ENCODE measurements at regions of chr21 and their contacts with region 1.

Region 1: GRCh38 chr21:40143822-40144525 is 276.7 kb downstream of the PCP4 start:
- DNase-seq: peak; percentile 47
- H3K4me3 Mint-ChIP-seq: no peak overlapping the region
- H3K27ac Mint-ChIP-seq: no peak overlapping the region
- H3K4me1 Mint-ChIP-seq: no peaks in the 10 kb centered on the region
- H3K27me3 Mint-ChIP-seq: no peaks in the 10 kb centered on the region

Region 2: DNA sequence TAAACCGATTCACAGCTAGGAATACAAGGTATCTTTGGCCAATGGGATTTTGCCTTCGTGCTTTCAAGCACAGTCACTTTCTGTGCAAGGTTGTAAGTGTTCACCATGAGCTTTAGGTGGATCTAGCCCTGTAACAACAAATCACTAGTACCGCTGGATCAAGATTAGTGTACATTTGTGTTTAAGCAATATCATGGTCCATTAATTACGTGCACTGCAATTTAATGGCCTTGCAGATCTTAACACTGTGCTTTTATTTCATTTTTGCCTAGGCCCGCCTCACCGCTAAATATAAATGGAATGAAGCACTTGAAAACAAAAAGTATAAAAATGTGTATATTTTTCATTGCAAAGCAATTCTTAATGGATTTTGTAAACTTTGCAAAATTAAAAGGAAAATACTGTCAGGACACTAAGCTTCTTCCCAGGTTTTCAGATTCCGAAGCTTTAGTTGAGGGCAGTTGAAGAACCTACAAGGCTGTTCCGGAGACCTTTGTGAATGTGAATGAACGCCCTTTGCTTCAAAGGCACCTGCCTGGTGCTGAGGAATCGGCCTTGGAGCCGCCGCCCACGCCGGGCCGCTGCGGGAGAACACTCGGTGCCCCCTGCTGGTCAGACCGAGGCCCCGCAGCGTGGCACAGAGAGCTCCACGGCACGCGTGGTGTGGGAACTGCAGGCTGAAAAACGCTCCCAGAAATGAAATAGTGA is 242.1 kb after region 1 on chr21:
- CTCF ChIA-PET with region 1: no interaction called
- POLR2A ChIA-PET with region 1: no interaction called
- intact Hi-C with region 1: loop called (anchors 10 kb)
- DNase-seq: peak; percentile 49
- H3K4me3 Mint-ChIP-seq: no peak overlapping the region
- H3K27ac Mint-ChIP-seq: no peak overlapping the region
- H3K4me1 Mint-ChIP-seq: no peaks in the 10 kb centered on the region
- H3K27me3 Mint-ChIP-seq: no peaks in the 10 kb centered on the region

Region 3: GRCh38 chr21:41068967-41069642 is 925.1 kb after region 1 on chr21:
- CTCF ChIA-PET with region 1: interaction called, 4 read pairs
- POLR2A ChIA-PET with region 1: no interaction called
- intact Hi-C with region 1: loop called (anchors 5 kb)
- DNase-seq: peak; percentile 79
- H3K4me3 Mint-ChIP-seq: peak overlapping the region; percentile 23
- H3K27ac Mint-ChIP-seq: no peak overlapping the region
- H3K4me1 Mint-ChIP-seq: peaks cover 7% of the 10 kb centered on the region
- H3K27me3 Mint-ChIP-seq: peaks cover 25% of the 10 kb centered on the region